Ascending aorta (tissue), 2 donors: ENCODE measurements at regions of chr12 and their contacts with region 1.

Region 1: DNA sequence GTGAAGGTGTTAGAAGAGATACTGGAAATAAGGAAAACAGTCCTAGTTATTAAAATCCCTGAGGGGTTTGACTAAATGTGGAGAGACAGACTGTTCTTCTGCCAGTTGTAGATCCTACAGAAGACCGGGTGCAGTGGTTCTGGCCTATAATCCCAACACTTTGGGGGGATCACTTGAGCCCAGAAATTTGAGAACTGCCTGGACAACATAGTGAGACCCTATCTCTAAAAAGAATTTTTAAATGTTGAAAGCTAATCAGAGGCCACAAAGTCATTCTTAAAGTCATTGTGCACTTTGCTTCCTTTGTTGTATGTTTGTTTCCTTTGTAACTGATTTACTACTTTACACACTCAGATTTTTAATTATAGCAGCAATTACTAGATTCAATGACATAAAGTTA is 61.2 kb upstream of the RASSF3 start:
- DNase-seq: no peak
- H3K4me3 ChIP-seq: no peak overlapping the region
- H3K27ac ChIP-seq: no peak overlapping the region
- H3K4me1 ChIP-seq: peaks cover 0 to 4% of the 10 kb centered on the region in 2 donors
- H3K27me3 ChIP-seq: no peaks in the 10 kb centered on the region
- CTCF ChIP-seq: no peak

Region 2: DNA sequence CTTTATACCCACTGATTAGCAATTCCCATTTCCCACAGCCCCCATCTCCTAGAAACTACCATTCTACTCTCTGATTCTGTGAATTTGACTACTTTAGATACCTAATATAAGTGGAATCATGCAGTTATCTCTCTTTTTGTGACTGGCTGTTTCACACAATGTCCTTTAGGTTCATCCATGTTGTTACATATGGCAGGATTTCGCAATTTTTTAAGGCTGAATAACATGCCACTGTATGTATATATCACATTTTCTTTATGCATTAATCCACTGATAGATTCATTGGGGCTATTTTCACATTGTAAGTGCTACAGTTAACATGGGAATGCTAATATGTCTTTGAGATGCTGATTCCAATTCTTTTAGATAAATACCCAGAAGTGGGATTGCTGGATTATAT is 109.0 kb before region 1 on chr12:
- intact Hi-C with region 1: no loop called
- DNase-seq: no peak
- H3K4me3 ChIP-seq: no peak overlapping the region
- H3K27ac ChIP-seq: no peak overlapping the region
- H3K4me1 ChIP-seq: no peaks in the 10 kb centered on the region
- H3K27me3 ChIP-seq: no peaks in the 10 kb centered on the region
- CTCF ChIP-seq: no peak

Region 3: GRCh38 chr12:64696080-64696741 is 147.1 kb after region 1 on chr12:
- intact Hi-C with region 1: loop called (anchors 1 kb)
- DNase-seq: no peak
- H3K4me3 ChIP-seq: no peak overlapping the region
- H3K27ac ChIP-seq: peak overlapping the region; percentile 1 to 37
- H3K4me1 ChIP-seq: peaks cover 0 to 40% of the 10 kb centered on the region in 2 donors
- H3K27me3 ChIP-seq: no peaks in the 10 kb centered on the region
- CTCF ChIP-seq: peak in 2 of 3 experiments; percentile 27 to 44